Posterior vena cava (tissue), 2 donors: ENCODE measurements at regions of chr14 and their contacts with region 1.

Region 1: DNA sequence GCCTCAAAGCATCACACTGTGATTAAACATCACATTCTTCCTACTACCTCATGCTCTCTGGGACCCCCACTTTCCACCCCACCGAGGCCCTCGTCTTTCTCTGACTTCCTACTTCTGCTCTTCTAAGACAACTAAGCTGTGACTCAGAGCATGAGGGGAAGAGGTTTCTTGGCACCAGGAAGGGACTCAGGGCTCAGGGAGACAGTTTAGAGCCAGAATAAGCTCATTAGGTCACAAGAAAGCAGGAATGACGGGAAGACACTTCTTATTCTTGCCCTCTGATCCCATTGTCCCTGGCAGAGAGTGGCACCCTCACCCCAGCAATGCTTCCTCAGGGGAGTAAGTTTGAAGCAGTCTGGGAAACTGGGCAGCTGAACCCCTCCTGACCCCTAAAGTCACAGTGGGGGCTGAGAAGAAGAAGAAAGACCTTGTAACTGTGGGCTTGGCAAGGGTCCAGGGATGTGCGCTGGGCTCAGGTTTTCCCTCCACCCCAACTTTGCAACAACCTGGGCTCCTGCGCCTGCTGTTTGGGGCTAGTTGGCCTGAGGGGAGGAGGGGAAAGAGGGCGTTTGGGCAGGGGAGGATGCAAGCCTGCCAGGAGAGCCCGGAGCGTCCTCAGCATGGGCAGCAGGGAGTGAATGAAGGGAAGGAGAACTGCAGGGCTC is 64.6 kb upstream of the ACTN1 start:
- DNase-seq: no peak

Region 2: DNA sequence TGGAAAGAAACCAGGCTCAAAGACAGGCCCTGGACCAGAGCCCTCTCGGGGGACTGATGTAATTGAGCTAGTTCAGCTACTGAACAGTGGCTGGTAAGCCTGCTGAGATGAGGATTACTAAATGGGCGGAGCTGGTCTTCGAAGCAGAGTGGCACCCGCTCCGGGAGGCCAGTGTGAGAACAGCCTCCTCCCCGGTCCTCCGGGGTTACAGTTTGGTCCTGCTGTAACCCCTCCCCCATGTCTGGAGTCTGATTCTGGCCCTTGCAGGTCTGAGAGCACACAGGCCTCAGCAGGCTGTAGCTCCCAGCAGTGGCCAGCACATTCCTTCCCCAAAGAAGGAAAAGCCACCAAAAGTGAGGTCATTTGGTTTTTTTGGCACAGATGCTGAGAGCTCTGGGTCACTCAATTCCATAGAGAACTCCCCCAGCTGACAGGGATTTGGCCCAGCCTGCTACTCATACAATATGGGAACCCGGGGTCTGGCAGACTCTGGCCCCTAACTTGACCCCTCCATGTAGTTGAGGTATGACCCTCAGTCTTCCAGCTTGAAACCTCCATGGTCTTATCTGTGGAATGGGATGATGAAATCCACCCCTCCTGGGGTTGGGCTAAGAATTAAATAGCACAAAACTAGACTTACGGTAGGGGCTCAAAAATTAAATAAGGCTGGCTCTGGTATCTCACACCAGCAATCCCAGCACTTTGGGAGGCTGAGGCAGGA is 103.7 kb before region 1 on chr14:
- intact Hi-C with region 1: loop called in 1 of 2 experiments (anchors 10 kb)
- DNase-seq: peak; percentile 93

Region 3: GRCh38 chr14:68979021-68979782 is 64.5 kb before region 1 on chr14 and contains the start of gene ACTN1:
- intact Hi-C with region 1: loop called in 1 of 2 experiments (anchors 10 kb)
- DNase-seq: peak; percentile 97
- total RNA-seq, gene ACTN1: 665 to 826 TPM

Region 4: DNA sequence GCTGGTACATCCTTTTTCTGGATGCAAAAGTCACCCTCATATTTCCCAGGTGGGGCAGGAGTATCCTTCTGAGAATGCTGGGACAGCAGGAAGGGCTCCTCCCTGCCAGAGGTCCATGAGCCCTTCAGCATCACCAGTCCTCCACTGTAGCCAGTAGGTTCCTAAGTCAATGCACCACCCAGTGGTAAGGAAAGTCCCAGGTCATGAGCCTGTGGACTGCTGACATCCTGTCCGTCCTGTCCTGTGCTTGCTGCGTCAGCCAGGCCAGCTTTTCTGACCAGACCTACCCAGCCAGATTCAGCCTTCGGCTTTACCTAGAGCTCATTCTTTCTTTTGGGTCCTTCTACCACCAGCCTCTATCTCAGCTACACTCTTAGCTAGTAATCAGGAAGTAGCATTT is 41.7 kb before region 1 on chr14:
- intact Hi-C with region 1: loop called in 1 of 2 experiments (anchors 5 kb)
- DNase-seq: no peak

Region 5: GRCh38 chr14:69090187-69090789 is 46.6 kb after region 1 on chr14:
- intact Hi-C with region 1: loop called in 1 of 2 experiments (anchors 2 kb)
- DNase-seq: no peak